Endothelial cell of umbilical vein (primary cell): ENCODE measurements at regions of chr12 and their contacts with region 1.

Region 1: DNA sequence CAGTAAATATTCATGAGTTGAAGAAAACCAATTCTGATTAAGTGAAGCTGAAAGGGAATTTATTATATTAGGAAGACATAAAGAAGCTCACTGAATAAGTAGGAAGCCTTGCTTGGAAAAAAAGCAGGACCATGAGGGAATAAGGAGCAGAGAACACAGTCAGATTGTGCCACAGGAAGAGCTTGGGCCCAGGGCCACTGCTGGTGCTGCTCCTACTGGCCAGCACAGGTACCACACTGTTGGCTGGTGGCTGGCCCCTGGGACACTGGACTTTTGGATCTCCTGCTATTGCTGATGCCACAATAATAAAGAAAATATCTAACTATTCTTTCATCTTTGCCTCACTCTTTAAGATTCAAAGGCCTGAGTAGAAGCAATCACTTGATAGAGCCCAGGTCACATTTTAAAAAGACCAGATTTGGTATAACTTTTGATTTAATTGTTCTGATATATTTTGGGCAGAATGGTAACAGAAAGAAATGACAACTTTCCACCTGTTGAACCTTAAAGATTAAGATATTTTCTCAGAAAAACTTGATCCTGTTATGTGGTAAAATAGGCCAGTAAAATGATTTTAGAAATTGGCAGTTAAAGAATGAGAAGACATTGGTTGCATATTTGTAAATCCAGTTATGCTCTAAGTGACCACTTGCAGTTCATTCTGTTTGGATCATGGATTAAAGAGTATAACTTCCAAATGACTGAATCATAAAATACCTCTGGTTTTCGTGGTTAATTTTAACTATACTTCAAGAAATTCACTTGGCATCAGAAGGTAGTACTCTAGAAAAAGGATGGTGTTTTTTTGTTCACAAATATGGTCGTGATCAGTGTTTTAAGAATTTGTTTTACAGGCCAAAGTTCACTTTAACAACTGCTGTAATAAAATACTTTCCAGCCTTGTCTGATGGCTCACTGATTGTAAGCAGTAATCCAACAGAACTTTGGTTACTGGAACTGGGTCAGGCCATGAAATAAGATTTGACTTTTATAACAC is 68.3 kb downstream of the DERA start:
- DNase-seq: peak; percentile 24
- H3K4me3 ChIP-seq: no peak overlapping the region
- H3K27ac ChIP-seq: peak overlapping the region; percentile 99
- H3K4me1 ChIP-seq: peaks cover 45% of the 10 kb centered on the region
- H3K27me3 ChIP-seq: no peaks in the 10 kb centered on the region
- CTCF ChIP-seq: peak; percentile 69 to 72
- POLR2A ChIP-seq: no peak

Region 2: DNA sequence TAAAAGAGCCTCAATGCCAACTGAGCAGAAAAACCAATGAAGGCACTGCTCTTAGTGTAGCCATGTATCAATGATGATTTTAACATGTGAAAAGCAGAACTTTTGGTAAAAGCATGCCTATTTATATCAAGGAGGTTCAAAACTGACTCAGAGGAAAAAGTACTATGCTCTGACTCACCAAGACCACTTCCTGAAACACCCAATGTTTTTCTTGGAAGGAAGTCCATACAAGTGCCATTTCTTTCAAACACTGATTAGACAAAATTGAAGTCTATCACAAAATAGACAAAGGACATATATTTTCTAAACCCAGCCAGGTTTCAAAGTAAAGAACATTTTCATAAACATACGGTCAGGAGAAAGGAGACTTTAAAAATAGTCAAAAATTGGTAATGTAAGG is 278.8 kb before region 1 on chr12:
- CTCF ChIA-PET with region 1: no interaction called
- POLR2A ChIA-PET with region 1: no interaction called
- dilution Hi-C with region 1: no loop called
- intact Hi-C with region 1: loop called (anchors 1 kb)
- DNase-seq: peak; percentile 93
- H3K4me3 ChIP-seq: no peak overlapping the region
- H3K27ac ChIP-seq: peak overlapping the region; percentile 90
- H3K4me1 ChIP-seq: peaks cover 36% of the 10 kb centered on the region
- H3K27me3 ChIP-seq: no peaks in the 10 kb centered on the region
- CTCF ChIP-seq: no peak
- POLR2A ChIP-seq: peak; percentile 44

Region 3: GRCh38 chr12:15899282-15899870 is 80.0 kb before region 1 on chr12:
- CTCF ChIA-PET with region 1: interaction called, 8 read pairs
- POLR2A ChIA-PET with region 1: no interaction called
- dilution Hi-C with region 1: no loop called
- intact Hi-C with region 1: loop called (anchors 1 kb)
- DNase-seq: peak; percentile 54
- H3K4me3 ChIP-seq: no peak overlapping the region
- H3K27ac ChIP-seq: no peak overlapping the region
- H3K4me1 ChIP-seq: peaks cover 3% of the 10 kb centered on the region
- H3K27me3 ChIP-seq: no peaks in the 10 kb centered on the region
- CTCF ChIP-seq: peak; percentile 44 to 45
- POLR2A ChIP-seq: no peak

Region 4: GRCh38 chr12:15928346-15928745 is 51.0 kb before region 1 on chr12:
- CTCF ChIA-PET with region 1: no interaction called
- POLR2A ChIA-PET with region 1: no interaction called
- dilution Hi-C with region 1: no loop called
- intact Hi-C with region 1: loop called (anchors 1 kb)
- DNase-seq: peak; percentile 59
- H3K4me3 ChIP-seq: no peak overlapping the region
- H3K27ac ChIP-seq: peak overlapping the region; percentile 54
- H3K4me1 ChIP-seq: peaks cover 15% of the 10 kb centered on the region
- H3K27me3 ChIP-seq: no peaks in the 10 kb centered on the region
- CTCF ChIP-seq: no peak
- POLR2A ChIP-seq: no peak

Region 5: GRCh38 chr12:16347391-16348298 is 368.3 kb after region 1 on chr12 and contains the start of gene MGST1:
- CTCF ChIA-PET with region 1: no interaction called
- POLR2A ChIA-PET with region 1: no interaction called
- dilution Hi-C with region 1: no loop called
- intact Hi-C with region 1: loop called (anchors 2 kb)
- DNase-seq: peak; percentile 67
- H3K4me3 ChIP-seq: peak within 1 kb of the TSS; percentile 86 to 95 (median 87)
- H3K27ac ChIP-seq: peak within 1 kb of the TSS; percentile 70
- H3K4me1 ChIP-seq: peaks cover 27% of the 10 kb centered on the region
- H3K27me3 ChIP-seq: no peaks in the 10 kb centered on the region
- CTCF ChIP-seq: no peak
- POLR2A ChIP-seq: peak; percentile 78
- total RNA-seq, gene MGST1: 170 and 173 TPM in 2 replicates

Region 6: DNA sequence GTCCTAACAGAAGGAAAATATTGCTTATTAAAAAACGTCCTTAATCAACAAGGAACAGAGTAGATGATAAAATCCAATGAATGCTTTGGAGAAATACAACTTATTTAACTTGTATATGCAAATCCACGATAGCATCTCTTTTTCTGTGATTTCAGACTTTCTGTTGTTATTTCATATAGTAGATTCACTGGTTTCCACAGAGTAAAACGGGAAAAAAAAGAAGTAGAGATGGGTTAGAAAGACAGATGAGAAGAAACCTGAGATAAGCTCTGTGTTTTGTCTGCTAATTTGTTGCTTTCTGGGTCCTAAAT is 1662.9 kb after region 1 on chr12:
- CTCF ChIA-PET with region 1: interaction called, 11 read pairs
- POLR2A ChIA-PET with region 1: no interaction called
- dilution Hi-C with region 1: no loop called
- intact Hi-C with region 1: no loop called
- DNase-seq: no peak
- H3K4me3 ChIP-seq: no peak overlapping the region
- H3K27ac ChIP-seq: no peak overlapping the region
- H3K4me1 ChIP-seq: no peaks in the 10 kb centered on the region
- H3K27me3 ChIP-seq: no peaks in the 10 kb centered on the region
- CTCF ChIP-seq: no peak
- POLR2A ChIP-seq: no peak